HepG2 (cell line): ENCODE measurements at regions of chrX and their contacts with region 1.

Region 1: DNA sequence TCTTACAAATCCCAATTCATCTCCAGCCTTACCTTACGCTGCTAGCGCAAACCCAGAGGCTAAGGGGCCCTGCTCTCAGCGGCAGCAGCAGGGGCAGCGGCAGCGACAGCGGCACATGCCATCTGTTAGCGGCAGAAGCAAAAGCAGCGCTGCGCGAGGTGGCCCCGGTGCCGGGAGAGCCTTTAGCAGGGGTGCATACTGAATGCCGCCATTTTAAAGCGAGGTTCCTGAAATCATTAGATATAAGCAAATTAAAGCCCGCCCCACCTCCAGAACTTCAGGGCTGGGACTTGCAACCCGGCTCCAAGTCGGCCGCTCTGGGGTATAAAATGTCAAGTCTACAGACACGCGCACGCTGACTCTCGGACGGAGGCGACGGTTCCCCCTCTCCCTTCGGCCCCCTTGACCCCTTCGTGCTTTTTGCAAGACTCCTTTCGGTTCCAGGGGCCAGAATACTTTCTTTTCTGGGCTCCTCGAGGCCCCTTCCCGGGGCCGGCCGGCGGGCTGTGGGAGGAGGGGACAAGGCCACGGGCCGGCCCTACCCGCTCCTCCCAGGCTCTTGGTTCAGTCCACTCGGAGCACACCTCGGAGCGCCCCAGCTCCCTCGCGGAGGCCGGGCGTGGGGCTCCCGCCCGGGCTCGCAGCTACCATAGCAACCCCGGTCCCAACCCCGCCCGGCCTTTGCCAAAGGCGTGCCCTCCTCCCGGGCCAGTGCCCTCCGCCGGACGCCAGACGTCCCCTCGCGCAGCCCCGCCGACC is at the start of gene MBNL3:
- DNase-seq: peak; percentile 33
- ATAC-seq: peak; percentile 63
- H3K4me3 ChIP-seq: peak within 1 kb of the TSS; percentile 64 to 73 (median 71)
- H3K27ac ChIP-seq: peak within 1 kb of the TSS; percentile 94
- H3K4me1 ChIP-seq: peaks cover 72% of the 10 kb centered on the region
- H3K27me3 ChIP-seq: no peaks in the 10 kb centered on the region
- CTCF ChIP-seq: no peak
- EP300 ChIP-seq: no peak
- POLR2A ChIP-seq: peak in 1 of 2 experiments; percentile 29; a peak in 2 of 4 replicates
- RAD21 ChIP-seq: no peak
- total RNA-seq, gene MBNL3: 155 and 367 TPM in 2 replicates

Region 2: GRCh38 chrX:132292793-132293192 is 196.2 kb before region 1 on chrX:
- CTCF ChIA-PET with region 1: no interaction called
- POLR2A ChIA-PET with region 1: no interaction called
- in situ Hi-C with region 1: no loop called
- intact Hi-C with region 1: loop called (anchors 10 kb)
- DNase-seq: peak; percentile 57
- ATAC-seq: peak; percentile 68
- H3K4me3 ChIP-seq: no peak overlapping the region
- H3K27ac ChIP-seq: peak overlapping the region; percentile 38
- H3K4me1 ChIP-seq: peaks cover 9% of the 10 kb centered on the region
- H3K27me3 ChIP-seq: no peaks in the 10 kb centered on the region
- CTCF ChIP-seq: peak; percentile 77
- EP300 ChIP-seq: no peak
- POLR2A ChIP-seq: no peak
- RAD21 ChIP-seq: peak; percentile 57

Region 3: GRCh38 chrX:132576939-132577338 is 87.9 kb after region 1 on chrX:
- CTCF ChIA-PET with region 1: no interaction called
- POLR2A ChIA-PET with region 1: no interaction called
- in situ Hi-C with region 1: no loop called
- intact Hi-C with region 1: no loop called
- DNase-seq: no peak
- ATAC-seq: no peak
- H3K4me3 ChIP-seq: no peak overlapping the region
- H3K27ac ChIP-seq: no peak overlapping the region
- H3K4me1 ChIP-seq: no peaks in the 10 kb centered on the region
- H3K27me3 ChIP-seq: no peaks in the 10 kb centered on the region
- CTCF ChIP-seq: no peak
- EP300 ChIP-seq: no peak
- POLR2A ChIP-seq: no peak
- RAD21 ChIP-seq: no peak

Region 4: DNA sequence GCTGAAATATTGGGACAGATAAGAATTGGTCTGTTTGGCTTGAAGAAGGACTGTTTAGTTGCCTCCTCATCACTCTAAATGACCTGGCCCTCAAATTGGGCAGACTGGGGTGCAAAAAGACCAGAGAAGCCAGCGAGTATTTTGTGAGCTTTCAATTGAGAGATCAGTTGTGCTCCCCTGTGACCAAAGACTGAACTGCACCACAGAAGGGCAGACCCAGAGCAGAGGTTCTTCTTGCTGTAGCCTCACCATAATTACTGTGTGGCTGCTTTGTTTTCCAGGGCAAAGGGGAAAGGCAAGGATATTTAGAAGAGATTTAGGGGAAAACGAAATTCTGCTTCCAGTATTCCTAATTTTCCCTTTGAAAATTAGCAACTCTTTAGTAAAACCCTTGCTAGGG is 103.9 kb after region 1 on chrX:
- CTCF ChIA-PET with region 1: no interaction called
- POLR2A ChIA-PET with region 1: interaction called, 14 read pairs
- in situ Hi-C with region 1: loop called (anchors 5 kb)
- intact Hi-C with region 1: loop called (anchors 1 kb)
- DNase-seq: peak; percentile 39
- ATAC-seq: peak; percentile 65
- H3K4me3 ChIP-seq: no peak overlapping the region
- H3K27ac ChIP-seq: no peak overlapping the region
- H3K4me1 ChIP-seq: peaks cover 79% of the 10 kb centered on the region
- H3K27me3 ChIP-seq: no peaks in the 10 kb centered on the region
- CTCF ChIP-seq: peak; percentile 65
- EP300 ChIP-seq: no peak
- POLR2A ChIP-seq: no peak
- RAD21 ChIP-seq: peak; percentile 37; the same call in 1 of the 2 replicates

Region 5: DNA sequence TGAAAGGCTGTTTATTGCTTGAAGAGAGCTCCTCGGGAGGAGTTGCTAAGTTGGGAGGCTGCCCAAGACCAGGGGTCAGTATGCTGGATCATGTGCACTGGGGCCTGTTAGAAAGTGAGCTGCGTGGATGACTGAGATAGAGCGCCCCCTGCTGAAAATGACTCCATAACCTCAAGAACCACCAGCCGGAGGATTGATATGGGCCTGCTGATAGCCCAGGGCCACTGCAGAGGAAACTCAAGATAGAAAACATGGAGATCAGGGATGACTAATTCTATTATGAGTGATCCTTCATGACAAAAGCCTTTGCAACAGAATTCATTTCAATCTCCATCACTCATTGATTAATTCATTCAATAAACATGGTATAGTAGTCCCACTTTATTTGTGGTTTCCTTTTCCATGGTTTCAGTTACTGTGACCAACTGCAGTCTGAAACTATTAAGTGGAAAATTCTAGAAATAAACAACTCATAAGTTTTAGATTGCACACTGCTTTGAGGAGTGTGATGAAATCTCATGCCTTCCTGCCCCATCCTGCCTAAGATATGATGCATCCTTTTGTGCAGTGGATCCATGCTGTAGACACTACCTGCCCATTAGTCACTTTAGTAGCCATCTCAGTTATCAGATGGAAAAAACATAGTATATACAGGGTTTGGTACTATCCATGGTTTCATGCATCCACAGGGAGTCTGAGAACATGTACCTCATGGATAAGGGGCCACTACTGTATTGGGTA is 126.6 kb after region 1 on chrX:
- CTCF ChIA-PET with region 1: no interaction called
- POLR2A ChIA-PET with region 1: interaction called, 9 read pairs
- in situ Hi-C with region 1: no loop called
- intact Hi-C with region 1: loop called (anchors 5 kb)
- DNase-seq: peak; percentile 44
- ATAC-seq: peak; percentile 79
- H3K4me3 ChIP-seq: no peak overlapping the region
- H3K27ac ChIP-seq: no peak overlapping the region
- H3K4me1 ChIP-seq: peaks cover 50% of the 10 kb centered on the region
- H3K27me3 ChIP-seq: no peaks in the 10 kb centered on the region
- CTCF ChIP-seq: peak; percentile 69
- EP300 ChIP-seq: no peak
- POLR2A ChIP-seq: no peak
- RAD21 ChIP-seq: 0 out of 2 replicates have a peak, but pooled peaks have one; percentile 23